ENCODE measurements at regions of chr11 and their contacts with region 1.

Region 1: DNA sequence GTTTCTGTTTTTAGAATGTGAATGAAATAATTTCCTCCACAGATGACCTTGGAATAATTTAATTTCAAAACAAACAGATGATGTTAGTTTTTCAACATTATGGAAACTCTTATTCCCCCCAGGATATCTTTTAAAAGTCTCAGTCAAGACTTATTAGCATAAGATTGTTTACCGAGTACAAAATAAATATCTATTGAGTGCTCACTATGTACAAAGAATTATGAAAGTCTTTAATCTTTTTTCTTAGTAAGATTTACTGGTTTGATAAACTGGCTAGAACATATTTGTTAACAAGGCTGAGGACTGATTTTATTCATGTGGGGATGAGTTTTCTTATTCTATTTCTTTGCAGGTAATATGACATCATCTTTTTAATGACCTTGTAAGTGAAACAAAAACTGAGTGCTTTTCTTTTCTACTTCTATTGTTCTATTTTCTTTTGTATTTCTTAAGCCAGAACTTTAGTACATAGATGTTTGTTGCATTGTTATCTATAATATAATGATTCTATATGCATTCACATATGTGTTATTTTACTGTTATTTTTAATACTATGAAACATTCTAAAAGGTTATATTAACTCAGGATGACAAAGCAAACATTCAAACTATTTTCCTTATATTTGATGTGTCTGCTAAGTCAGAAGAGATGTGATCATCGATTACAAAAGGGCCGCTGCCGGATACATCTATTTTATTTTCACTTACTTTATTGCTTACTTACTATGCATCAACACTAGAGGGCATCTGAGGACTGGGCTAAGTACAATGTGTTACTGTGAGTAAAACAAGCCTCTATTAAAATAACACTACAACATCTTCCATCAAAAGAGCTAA is 111.0 kb upstream of the ARHGAP42 start:
- H3K4me3 Mint-ChIP-seq: no peak overlapping the region
- H3K27ac Mint-ChIP-seq: no peak overlapping the region
- H3K4me1 Mint-ChIP-seq: no peaks in the 10 kb centered on the region
- H3K27me3 Mint-ChIP-seq: no peaks in the 10 kb centered on the region

Region 2: GRCh38 chr11:100403817-100404216 is 172.3 kb before region 1 on chr11:
- intact Hi-C with region 1: no loop called
- H3K4me3 Mint-ChIP-seq: no peak overlapping the region
- H3K27ac Mint-ChIP-seq: no peak overlapping the region
- H3K4me1 Mint-ChIP-seq: no peaks in the 10 kb centered on the region
- H3K27me3 Mint-ChIP-seq: no peaks in the 10 kb centered on the region

Region 3: DNA sequence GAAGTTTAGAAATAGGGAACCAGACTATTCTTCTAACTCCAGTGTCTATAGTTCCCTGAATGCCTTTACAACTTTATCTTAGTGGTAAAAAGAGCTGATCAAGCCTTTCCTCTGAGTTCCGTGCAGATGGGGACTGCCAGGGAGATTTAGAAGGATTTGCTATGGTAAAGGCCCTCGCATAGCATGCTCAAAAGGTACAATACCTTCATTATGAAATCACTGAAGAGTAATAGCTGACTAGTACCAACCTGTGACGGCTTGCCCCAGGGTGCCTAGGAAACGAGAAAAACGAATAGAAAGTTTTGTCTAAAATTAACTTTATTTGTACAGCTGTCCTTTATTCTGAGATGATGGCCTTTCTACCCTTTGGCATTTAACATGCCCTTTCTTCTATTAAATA is 39.1 kb before region 1 on chr11:
- intact Hi-C with region 1: no loop called
- H3K4me3 Mint-ChIP-seq: no peak overlapping the region
- H3K27ac Mint-ChIP-seq: no peak overlapping the region
- H3K4me1 Mint-ChIP-seq: no peaks in the 10 kb centered on the region
- H3K27me3 Mint-ChIP-seq: no peaks in the 10 kb centered on the region

Region 4: GRCh38 chr11:100855466-100856067 is 279.5 kb after region 1 on chr11:
- intact Hi-C with region 1: loop called (anchors 1 kb)
- H3K4me3 Mint-ChIP-seq: no peak overlapping the region
- H3K27ac Mint-ChIP-seq: no peak overlapping the region
- H3K4me1 Mint-ChIP-seq: no peaks in the 10 kb centered on the region
- H3K27me3 Mint-ChIP-seq: no peaks in the 10 kb centered on the region

Region 5: DNA sequence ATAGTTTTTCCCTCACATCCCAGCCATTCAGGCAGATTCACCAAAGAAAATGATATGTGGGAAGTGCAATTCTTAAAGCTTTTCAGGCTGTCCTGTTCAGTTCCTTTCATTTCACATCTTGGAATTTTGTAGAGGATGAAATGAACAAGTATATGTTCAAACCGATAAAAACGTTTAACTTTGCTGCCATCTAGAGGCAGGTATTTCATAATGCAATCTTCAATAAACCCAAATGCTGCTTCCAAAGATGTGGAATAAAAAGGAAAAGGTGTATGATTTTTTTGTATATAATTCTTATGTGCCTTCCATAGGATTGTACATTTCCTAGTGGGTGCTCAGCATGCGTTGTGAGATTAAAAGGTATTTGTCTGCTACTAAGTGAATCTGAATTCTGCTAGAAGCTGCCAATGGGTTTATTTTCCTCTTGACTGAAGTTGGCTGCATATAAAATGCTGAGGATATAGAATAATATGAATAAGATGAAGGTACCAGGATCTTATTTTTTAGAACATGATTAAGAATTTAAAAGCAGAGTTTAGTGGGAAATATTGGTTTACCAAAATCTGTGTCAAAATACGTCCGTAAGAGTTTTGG is 354.2 kb after region 1 on chr11:
- intact Hi-C with region 1: loop called (anchors 1 kb)
- H3K4me3 Mint-ChIP-seq: no peak overlapping the region
- H3K27ac Mint-ChIP-seq: no peak overlapping the region
- H3K4me1 Mint-ChIP-seq: no peaks in the 10 kb centered on the region
- H3K27me3 Mint-ChIP-seq: no peaks in the 10 kb centered on the region